ENCODE measurements at regions of chr17 and their contacts with region 1.

Region 1: DNA sequence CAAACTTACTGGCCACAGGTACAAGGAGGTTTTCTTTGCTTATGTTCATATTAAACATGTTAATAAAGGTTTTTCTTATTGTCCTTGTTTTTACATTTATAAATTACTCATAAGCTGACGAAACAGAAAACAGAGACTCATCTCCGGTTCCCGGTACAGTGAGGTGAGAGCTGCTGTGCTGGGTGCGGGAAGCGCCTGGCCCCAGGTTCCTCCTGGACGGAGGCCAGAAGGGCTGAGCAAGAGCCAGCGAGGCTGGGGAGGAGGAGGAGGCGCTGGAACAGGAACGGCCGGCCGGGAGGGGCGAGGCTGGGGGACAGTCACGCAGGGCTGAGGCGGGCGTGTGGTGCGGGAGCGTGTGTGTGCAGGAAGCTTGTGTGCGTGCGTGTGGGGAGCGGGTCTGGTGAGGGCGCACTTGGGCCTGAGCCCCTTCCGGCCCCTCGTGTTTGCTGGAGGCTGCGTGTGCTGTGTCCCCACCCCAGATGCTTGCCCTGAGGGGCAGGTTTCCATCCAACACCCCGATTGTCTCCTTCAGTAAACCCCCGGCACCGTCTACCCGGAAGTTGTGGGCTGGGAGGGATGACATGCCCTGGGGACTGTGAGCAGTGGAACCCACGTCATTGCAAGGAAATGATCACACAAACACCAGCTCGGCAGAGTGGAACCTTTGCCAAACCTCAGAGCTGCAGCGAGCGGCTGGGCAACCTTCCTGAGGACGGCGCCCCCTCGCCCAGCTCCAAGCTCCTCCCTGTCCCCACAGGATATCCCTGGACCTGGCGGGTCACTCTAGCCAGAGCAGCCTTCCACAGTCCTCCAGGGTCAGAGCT is 19.5 kb downstream of the CD7 start:
- DNase-seq: peak; percentile 97
- ATAC-seq: peak; percentile 70
- H3K4me3 Mint-ChIP-seq: peak overlapping the region; percentile 82
- H3K27ac Mint-ChIP-seq: peak overlapping the region; percentile 100
- H3K4me1 Mint-ChIP-seq: peaks cover 86% of the 10 kb centered on the region
- H3K27me3 Mint-ChIP-seq: no peaks in the 10 kb centered on the region

Region 2: DNA sequence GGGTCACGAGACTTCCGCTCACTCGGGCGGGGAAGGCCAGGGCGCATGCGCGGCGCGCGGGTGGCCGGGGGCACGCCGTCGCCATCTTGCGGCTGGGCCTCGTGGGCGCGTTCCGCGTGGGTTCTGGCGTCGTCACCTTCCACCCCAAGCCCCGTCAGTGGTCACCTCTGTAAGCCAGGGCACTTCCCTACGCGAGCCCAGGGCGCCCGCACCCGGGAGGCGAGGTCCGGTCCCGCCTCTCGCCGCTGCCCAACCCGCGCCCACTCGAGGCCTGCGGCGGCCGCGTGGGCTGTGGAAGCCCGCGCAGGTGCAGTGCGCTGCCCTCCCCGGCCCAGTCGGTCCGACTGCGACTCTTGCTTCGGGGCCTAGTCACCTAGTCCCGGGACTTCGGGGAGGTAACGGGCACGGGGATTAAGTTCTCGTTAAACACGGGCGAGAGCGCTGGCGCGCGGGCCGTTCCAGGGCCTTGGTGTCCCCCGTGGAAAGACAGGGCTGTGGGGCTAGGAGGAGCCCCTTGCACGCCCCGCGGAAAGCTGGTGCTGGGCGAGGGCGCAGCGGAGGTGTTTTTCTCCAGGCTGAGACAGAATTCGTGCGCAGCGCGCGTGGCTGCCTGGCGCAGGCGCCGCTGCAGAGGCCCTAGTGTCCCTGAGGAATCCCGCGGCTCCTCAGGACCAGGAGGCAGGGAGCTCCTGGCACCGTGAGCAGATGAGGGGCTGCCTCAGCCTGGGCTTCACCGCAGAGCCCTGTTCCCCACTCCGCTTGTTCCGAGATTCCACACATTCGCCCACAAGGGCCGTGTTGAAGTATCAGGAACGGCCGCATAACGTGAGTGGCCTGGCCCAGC is 426.3 kb before region 1 on chr17:
- CTCF ChIA-PET with region 1: no interaction called
- DNase-seq: peak; percentile 96
- ATAC-seq: peak; percentile 17
- H3K4me3 Mint-ChIP-seq: peak overlapping the region; percentile 82
- H3K27ac Mint-ChIP-seq: peak overlapping the region; percentile 93
- H3K4me1 Mint-ChIP-seq: peaks cover 37% of the 10 kb centered on the region
- H3K27me3 Mint-ChIP-seq: no peaks in the 10 kb centered on the region

Region 3: GRCh38 chr17:82315703-82316358 is 17.9 kb after region 1 on chr17:
- CTCF ChIA-PET with region 1: interaction called, 206 read pairs
- DNase-seq: peak; percentile 64
- ATAC-seq: peak; percentile 39
- H3K4me3 Mint-ChIP-seq: peak overlapping the region; percentile 93
- H3K27ac Mint-ChIP-seq: peak overlapping the region; percentile 75
- H3K4me1 Mint-ChIP-seq: peaks cover 14% of the 10 kb centered on the region
- H3K27me3 Mint-ChIP-seq: no peaks in the 10 kb centered on the region

Region 4: DNA sequence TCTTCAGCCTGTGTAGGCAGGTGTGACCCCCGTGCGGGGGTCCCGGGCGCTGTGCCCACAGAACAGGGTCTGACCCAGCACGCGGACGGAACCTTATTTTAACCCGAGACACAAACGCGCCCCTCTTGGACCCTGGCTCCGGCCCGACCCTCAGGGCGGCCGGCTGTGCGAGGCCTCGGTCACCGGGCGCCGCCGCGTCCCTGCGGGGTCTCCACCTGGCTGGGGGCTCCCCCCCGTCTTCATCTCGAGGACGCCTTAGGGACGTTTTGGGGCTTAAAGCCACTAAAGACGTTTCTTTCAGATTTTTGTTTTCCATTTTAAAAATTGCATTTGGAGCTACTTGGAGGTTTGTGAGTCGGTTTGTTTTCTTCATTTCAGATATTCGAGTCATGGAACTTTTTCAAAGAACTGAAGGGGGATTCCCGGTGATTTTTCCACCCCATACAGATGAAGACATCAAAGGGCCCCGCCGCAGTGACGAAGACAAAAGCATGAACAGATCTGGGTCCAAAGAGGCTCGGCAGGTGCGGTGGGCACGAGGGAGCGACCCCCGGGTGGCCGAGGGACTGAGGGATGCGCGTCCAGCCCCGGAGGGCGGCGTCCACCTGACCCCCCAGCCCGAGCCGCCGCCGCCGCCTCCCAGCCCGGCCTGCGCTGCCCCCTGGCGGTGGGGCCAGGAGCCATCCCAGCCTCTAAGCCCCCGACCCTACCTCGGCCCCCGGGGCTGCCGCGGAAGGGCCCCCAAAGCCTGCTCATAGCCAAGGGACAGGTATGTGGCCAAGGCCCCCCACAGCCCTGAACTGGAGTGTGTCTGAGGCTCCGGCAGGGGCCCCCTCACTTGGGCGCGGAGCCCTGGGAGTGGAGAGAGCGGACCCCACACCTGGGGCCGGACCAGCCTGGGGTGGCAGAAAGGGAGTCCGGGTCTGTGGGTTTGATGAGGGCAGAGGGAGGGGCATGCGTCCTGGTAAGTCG is 23.3 kb after region 1 on chr17:
- CTCF ChIA-PET with region 1: interaction called, 206 read pairs
- DNase-seq: peak; percentile 67
- ATAC-seq: peak; percentile 43
- H3K4me3 Mint-ChIP-seq: peak overlapping the region; percentile 66
- H3K27ac Mint-ChIP-seq: peak overlapping the region; percentile 71
- H3K4me1 Mint-ChIP-seq: peaks cover 16% of the 10 kb centered on the region
- H3K27me3 Mint-ChIP-seq: no peaks in the 10 kb centered on the region

Region 5: DNA sequence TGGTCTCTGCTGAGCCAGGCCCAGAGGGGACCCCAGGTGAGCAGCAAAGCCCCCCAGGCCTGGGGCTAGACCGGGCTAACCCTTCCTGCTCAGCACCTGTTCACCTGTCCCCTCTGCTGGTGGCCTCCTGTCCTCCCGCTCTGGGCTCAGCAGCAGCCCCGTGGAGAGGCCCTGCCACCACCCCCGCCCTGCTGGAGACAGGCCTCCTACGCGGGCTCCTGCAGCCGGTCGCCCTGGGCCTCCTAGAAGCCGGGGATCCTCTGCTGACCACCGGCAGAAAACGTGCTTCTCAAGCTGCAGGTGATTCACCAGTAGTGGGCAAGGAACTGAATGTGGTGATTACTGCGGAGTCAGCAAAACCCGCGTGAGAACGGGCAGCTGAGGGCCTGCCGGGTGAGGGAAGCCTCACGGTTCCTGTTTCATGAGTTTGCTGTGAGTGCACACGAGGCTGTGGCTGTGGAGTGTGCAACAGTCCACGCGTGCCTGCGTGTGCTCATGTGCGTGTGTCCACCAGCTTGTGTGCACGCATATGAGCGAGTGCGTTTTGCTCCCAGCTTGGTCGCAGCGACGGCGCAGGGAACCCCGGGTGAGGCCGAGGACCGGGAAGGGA is 34.8 kb after region 1 on chr17:
- CTCF ChIA-PET with region 1: interaction called, 154 read pairs
- DNase-seq: no peak
- ATAC-seq: peak; percentile 40
- H3K4me3 Mint-ChIP-seq: peak overlapping the region; percentile 58
- H3K27ac Mint-ChIP-seq: peak overlapping the region; percentile 28
- H3K4me1 Mint-ChIP-seq: peaks cover 26% of the 10 kb centered on the region
- H3K27me3 Mint-ChIP-seq: peaks cover 24% of the 10 kb centered on the region

Measured in activated CD8-positive, alpha-beta memory T cell treated with anti-CD3 and anti-CD28 coated beads, Interleukin-2, amount 10 ng/mL, durations not matched to agents 7 days and 5 days (primary cell).